H1 (cell line): ENCODE measurements at regions of chr6 and their contacts with region 1.

Region 1: GRCh38 chr6:157235600-157236039 is 87.7 kb downstream of the TMEM242 start:
- DNase-seq: peak in 1 of 2 experiments; percentile 57
- H3K4me3 ChIP-seq: peak overlapping the region; percentile 40 to 65 (median 52)
- H3K27ac ChIP-seq: no peak overlapping the region
- H3K4me1 ChIP-seq: peaks cover 0 to 12% (median 6%) of the 10 kb centered on the region in 4 experiments; a peak in 6 of 7 replicates
- H3K27me3 ChIP-seq: peaks cover 6 to 39% (median 33%) of the 10 kb centered on the region in 4 experiments
- CTCF ChIP-seq: peak in 2 of 3 experiments; percentile 69 to 83; a peak in 3 of 4 replicates
- EP300 ChIP-seq: no peak
- POLR2A ChIP-seq: no peak
- RAD21 ChIP-seq: peak; percentile 35 to 60; a peak in 3 of 4 replicates

Region 2: DNA sequence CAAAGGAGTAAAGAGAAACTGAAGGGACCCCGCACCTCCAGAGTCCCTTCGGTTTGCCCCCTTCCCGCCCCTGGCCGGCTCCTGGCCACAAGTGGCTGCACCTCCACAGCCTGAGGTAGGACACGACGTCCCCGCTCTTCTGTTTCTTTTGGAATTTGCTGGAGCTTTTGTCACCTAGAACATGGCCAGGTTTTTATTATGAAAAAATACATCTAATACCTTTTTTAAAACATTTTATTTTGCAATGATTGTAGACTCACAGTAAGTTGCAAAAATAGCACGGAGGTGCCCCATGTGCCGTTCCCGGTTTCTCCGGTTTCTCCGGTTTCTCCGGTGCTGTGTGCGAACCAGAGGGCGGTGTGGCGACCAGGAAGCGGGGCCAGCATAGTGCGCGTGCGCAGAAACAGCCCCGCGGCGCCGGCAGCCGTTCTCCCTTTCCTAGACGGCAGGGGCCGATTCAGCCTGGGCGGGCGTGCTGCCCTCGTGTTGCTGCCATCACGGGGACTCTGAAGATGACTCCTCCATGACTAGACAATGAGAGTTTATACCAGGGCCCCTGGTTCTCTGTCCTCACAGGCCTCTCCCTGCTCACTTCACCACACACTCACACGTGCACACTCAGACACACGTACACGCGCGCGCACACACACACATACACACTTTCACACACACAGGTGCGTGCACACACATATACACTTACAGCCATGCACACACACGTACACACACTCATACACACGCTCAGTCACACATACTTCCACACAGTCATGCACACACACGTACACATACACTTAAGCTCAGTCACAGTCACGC is 14.4 kb before region 1 on chr6:
- CTCF ChIA-PET with region 1: interaction called, 13 read pairs
- POLR2A ChIA-PET with region 1: interaction called, 3 read pairs
- DNase-seq: peak in 1 of 2 experiments; percentile 80
- H3K4me3 ChIP-seq: no peak overlapping the region
- H3K27ac ChIP-seq: no peak overlapping the region
- H3K4me1 ChIP-seq: peaks cover 0 to 8% (median 0%) of the 10 kb centered on the region in 4 experiments; a peak in 1 of 7 replicates
- H3K27me3 ChIP-seq: peaks cover 0 to 2% (median 0%) of the 10 kb centered on the region in 4 experiments; a peak in 1 of 7 replicates
- CTCF ChIP-seq: no peak
- EP300 ChIP-seq: no peak
- POLR2A ChIP-seq: no peak
- RAD21 ChIP-seq: no peak

Region 3: DNA sequence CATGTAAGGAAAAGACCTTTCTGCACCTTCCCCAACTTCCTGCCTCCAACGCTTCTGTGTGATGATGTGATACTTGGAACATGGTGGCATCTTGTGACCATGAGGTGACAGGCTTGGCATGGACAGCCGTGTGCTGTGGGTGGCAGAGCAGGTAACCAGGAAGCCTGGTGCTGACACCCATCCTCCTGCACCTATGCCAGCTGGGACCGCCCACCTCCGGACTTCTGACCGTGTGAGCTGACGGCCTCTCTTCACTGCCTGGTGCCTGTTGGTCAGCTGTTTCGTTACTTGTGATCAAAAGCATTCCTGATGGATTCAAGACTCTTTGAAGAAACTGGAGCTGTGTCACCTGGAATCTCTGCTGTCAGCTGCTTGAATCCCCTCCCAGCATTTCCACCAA is 17.4 kb after region 1 on chr6:
- CTCF ChIA-PET with region 1: interaction called, 14 read pairs
- POLR2A ChIA-PET with region 1: no interaction called
- DNase-seq: no peak
- H3K4me3 ChIP-seq: no peak overlapping the region
- H3K27ac ChIP-seq: no peak overlapping the region
- H3K4me1 ChIP-seq: no peaks in the 10 kb centered on the region
- H3K27me3 ChIP-seq: no peaks in the 10 kb centered on the region; a peak in 1 of 7 replicates
- CTCF ChIP-seq: no peak
- EP300 ChIP-seq: no peak
- POLR2A ChIP-seq: no peak
- RAD21 ChIP-seq: no peak

Region 4: GRCh38 chr6:157264701-157265100 is 29.1 kb after region 1 on chr6:
- CTCF ChIA-PET with region 1: interaction called, 12 read pairs
- POLR2A ChIA-PET with region 1: interaction called, 3 read pairs
- DNase-seq: no peak
- H3K4me3 ChIP-seq: no peak overlapping the region
- H3K27ac ChIP-seq: no peak overlapping the region
- H3K4me1 ChIP-seq: peaks cover 0 to 6% (median 2%) of the 10 kb centered on the region in 4 experiments; a peak in 2 of 7 replicates
- H3K27me3 ChIP-seq: no peaks in the 10 kb centered on the region; a peak in 1 of 7 replicates
- CTCF ChIP-seq: no peak
- EP300 ChIP-seq: no peak
- POLR2A ChIP-seq: no peak
- RAD21 ChIP-seq: no peak